ENCODE measurements at regions of chr1 and their contacts with region 1.

Region 1: GRCh38 chr1:168082008-168082876 is 54.5 kb downstream of the GPR161 start:
- DNase-seq: peak; percentile 83
- ATAC-seq: peak; percentile 88
- H3K4me3 Mint-ChIP-seq: no peak overlapping the region
- H3K27ac Mint-ChIP-seq: no peak overlapping the region
- H3K4me1 Mint-ChIP-seq: peaks cover 3% of the 10 kb centered on the region
- H3K27me3 Mint-ChIP-seq: no peaks in the 10 kb centered on the region

Region 2: GRCh38 chr1:167715157-167715999 is 366.9 kb before region 1 on chr1:
- CTCF ChIA-PET with region 1: interaction called, 14 read pairs
- DNase-seq: peak; percentile 93
- ATAC-seq: peak; percentile 57
- H3K4me3 Mint-ChIP-seq: peak overlapping the region; percentile 80
- H3K27ac Mint-ChIP-seq: peak overlapping the region; percentile 93
- H3K4me1 Mint-ChIP-seq: peaks cover 29% of the 10 kb centered on the region
- H3K27me3 Mint-ChIP-seq: peaks cover 15% of the 10 kb centered on the region

Region 3: GRCh38 chr1:167936068-167936929 is 145.9 kb before region 1 on chr1 and contains the start of gene DCAF6:
- CTCF ChIA-PET with region 1: interaction called, 25 read pairs
- DNase-seq: peak; percentile 98
- ATAC-seq: peak; percentile 84
- H3K4me3 Mint-ChIP-seq: peak within 1 kb of the TSS; percentile 91
- H3K27ac Mint-ChIP-seq: peak within 1 kb of the TSS; percentile 97
- H3K4me1 Mint-ChIP-seq: peaks cover 32% of the 10 kb centered on the region
- H3K27me3 Mint-ChIP-seq: no peaks in the 10 kb centered on the region
- total RNA-seq, gene DCAF6: 27.5 to 31.1 TPM

Region 4: DNA sequence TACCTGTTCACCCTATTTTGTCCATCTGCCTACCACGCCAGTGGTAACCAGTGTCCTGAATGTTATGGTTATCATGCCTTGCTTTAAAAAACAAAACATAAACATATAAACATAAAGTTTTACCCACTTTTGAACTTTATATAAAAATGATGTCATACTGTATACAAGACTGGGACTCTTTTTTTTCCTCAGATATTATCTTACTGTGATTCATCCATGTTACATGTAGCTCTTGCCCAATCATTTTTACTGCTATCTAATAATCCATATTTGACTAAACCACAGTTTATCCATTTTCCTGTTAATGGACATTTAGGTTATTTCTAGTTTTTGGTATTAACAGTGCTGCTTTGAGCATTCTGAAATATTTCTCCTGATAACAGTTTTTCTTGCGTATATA is 24.3 kb before region 1 on chr1:
- CTCF ChIA-PET with region 1: interaction called, 19 read pairs
- DNase-seq: no peak
- ATAC-seq: no peak
- H3K4me3 Mint-ChIP-seq: no peak overlapping the region
- H3K27ac Mint-ChIP-seq: no peak overlapping the region
- H3K4me1 Mint-ChIP-seq: peaks cover 3% of the 10 kb centered on the region
- H3K27me3 Mint-ChIP-seq: no peaks in the 10 kb centered on the region

Region 5: GRCh38 chr1:168065506-168065905 is 16.7 kb before region 1 on chr1:
- CTCF ChIA-PET with region 1: interaction called, 19 read pairs
- DNase-seq: no peak
- ATAC-seq: no peak
- H3K4me3 Mint-ChIP-seq: no peak overlapping the region
- H3K27ac Mint-ChIP-seq: no peak overlapping the region
- H3K4me1 Mint-ChIP-seq: no peaks in the 10 kb centered on the region
- H3K27me3 Mint-ChIP-seq: no peaks in the 10 kb centered on the region

Region 6: GRCh38 chr1:168092566-168093355 is 10.5 kb after region 1 on chr1:
- CTCF ChIA-PET with region 1: interaction called, 21 read pairs
- DNase-seq: no peak
- ATAC-seq: no peak
- H3K4me3 Mint-ChIP-seq: no peak overlapping the region
- H3K27ac Mint-ChIP-seq: no peak overlapping the region
- H3K4me1 Mint-ChIP-seq: no peaks in the 10 kb centered on the region
- H3K27me3 Mint-ChIP-seq: no peaks in the 10 kb centered on the region

Region 7: DNA sequence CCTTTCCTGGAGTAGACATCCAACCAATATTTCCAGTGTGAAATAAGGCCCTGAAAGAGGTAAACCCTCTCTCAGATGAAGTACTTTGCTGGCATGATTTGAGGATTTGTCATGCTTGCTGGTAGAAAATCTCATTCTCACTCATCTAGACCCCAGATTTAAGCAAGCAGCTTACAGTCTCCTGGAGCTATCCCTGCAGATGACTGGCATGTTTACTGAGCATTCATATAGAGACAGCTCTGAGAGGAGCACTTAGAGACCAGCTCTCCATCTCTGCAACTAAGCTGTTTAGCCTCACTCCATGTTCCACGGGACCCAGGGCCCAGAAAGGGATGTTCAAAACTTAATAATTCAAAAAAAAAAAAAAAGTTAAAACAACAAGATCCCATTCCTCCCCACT is 20.2 kb after region 1 on chr1:
- CTCF ChIA-PET with region 1: interaction called, 11 read pairs
- DNase-seq: no peak
- ATAC-seq: no peak
- H3K4me3 Mint-ChIP-seq: no peak overlapping the region
- H3K27ac Mint-ChIP-seq: no peak overlapping the region
- H3K4me1 Mint-ChIP-seq: no peaks in the 10 kb centered on the region
- H3K27me3 Mint-ChIP-seq: peaks cover 8% of the 10 kb centered on the region

Region 8: GRCh38 chr1:168234846-168235547 is 152.8 kb after region 1 on chr1:
- CTCF ChIA-PET with region 1: no interaction called
- DNase-seq: peak; percentile 73
- ATAC-seq: peak; percentile 86
- H3K4me3 Mint-ChIP-seq: no peak overlapping the region
- H3K27ac Mint-ChIP-seq: peak overlapping the region; percentile 77
- H3K4me1 Mint-ChIP-seq: peaks cover 52% of the 10 kb centered on the region
- H3K27me3 Mint-ChIP-seq: no peaks in the 10 kb centered on the region

Measured in activated CD8-positive, alpha-beta memory T cell treated with anti-CD3 and anti-CD28 coated beads, Interleukin-2, amount 10 ng/mL, durations not matched to agents 7 days and 5 days (primary cell).